ENCODE measurements at regions of chr11 and their contacts with region 1.

Region 1: DNA sequence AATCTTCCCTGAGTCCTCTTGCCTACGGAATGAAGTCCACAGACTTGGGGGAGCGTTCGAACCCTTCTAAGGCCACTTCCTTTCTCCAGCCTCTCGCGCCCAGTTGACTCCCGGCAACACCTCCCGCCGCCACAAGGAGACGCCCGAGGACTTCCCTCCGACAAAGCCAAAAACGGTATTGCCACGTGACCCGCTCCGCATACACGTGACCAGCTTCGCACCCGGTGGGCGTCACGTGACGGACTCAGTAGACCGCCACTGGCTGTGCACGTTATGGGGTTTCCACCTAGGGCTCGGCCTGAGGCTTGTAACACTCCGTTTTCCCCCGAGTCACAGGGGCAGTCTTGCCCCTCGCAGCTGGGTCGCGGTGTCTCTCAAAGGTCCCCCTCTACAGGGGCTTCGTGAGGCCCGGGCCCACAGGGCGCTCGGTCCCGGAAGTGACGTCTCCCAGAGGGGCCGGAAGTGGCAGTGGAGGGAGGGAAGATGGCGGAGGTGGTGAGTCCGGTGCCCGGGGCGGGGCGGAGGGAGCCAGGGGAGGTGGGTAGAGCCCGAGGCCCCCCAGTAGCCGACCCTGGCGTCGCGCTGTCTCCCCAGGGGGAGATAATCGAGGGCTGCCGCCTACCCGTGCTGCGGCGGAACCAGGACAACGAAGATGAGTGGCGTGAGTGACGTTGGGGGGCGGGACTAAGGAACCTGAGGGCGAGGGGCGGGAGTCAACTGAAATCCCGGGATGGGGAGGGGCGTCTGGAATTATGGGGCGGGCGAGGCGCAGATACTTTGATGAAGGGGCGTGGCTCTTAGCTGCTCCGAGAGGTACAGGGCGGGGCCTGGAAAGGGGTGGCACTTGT is at the start of gene KAT5:
- DNase-seq: peak; percentile 99
- ATAC-seq: peak; percentile 86
- H3K4me3 Mint-ChIP-seq: peak within 1 kb of the TSS; percentile 90
- H3K27ac Mint-ChIP-seq: peak within 1 kb of the TSS; percentile 96
- H3K4me1 Mint-ChIP-seq: peaks cover 27% of the 10 kb centered on the region
- H3K27me3 Mint-ChIP-seq: no peaks in the 10 kb centered on the region
- total RNA-seq, gene KAT5: 56.5 to 65.1 TPM

Region 2: DNA sequence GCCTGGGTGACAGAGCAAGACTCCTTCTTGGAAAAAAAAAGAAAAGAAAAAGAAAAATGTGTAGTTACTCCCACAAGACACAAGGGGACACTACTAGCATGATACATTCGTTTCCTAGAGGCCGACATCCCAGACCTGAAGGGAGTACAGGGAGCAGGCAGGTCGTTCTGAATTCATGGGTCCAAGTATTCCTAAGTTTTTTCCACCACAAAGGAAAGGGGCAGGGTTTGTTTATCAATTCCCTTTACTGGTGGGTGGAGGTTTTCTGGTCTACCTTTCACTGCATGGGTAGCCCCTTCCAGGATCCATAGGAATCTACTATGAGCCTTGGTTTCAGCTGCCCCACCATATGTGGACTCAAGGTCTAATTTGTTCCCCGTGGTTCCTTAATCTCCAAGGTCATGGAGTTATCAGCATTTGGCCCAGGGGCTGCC is 345.7 kb before region 1 on chr11:
- CTCF ChIA-PET with region 1: no interaction called
- POLR2A ChIA-PET with region 1: no interaction called
- intact Hi-C with region 1: no loop called
- DNase-seq: peak; percentile 48
- ATAC-seq: peak; percentile 72
- H3K4me3 Mint-ChIP-seq: no peak overlapping the region
- H3K27ac Mint-ChIP-seq: no peak overlapping the region
- H3K4me1 Mint-ChIP-seq: peaks cover 10% of the 10 kb centered on the region
- H3K27me3 Mint-ChIP-seq: no peaks in the 10 kb centered on the region

Region 3: GRCh38 chr11:65662799-65663638 is 49.0 kb before region 1 on chr11 and contains the start of gene RELA:
- CTCF ChIA-PET with region 1: interaction called, 4 read pairs
- POLR2A ChIA-PET with region 1: no interaction called
- intact Hi-C with region 1: loop called in 1 of 2 experiments (anchors 1 kb)
- DNase-seq: peak; percentile 96
- ATAC-seq: peak; percentile 90
- H3K4me3 Mint-ChIP-seq: peak within 1 kb of the TSS; percentile 88
- H3K27ac Mint-ChIP-seq: peak within 1 kb of the TSS; percentile 97
- H3K4me1 Mint-ChIP-seq: peaks cover 41% of the 10 kb centered on the region
- H3K27me3 Mint-ChIP-seq: no peaks in the 10 kb centered on the region
- total RNA-seq, gene RELA: 76.9 to 109 TPM

Region 4: DNA sequence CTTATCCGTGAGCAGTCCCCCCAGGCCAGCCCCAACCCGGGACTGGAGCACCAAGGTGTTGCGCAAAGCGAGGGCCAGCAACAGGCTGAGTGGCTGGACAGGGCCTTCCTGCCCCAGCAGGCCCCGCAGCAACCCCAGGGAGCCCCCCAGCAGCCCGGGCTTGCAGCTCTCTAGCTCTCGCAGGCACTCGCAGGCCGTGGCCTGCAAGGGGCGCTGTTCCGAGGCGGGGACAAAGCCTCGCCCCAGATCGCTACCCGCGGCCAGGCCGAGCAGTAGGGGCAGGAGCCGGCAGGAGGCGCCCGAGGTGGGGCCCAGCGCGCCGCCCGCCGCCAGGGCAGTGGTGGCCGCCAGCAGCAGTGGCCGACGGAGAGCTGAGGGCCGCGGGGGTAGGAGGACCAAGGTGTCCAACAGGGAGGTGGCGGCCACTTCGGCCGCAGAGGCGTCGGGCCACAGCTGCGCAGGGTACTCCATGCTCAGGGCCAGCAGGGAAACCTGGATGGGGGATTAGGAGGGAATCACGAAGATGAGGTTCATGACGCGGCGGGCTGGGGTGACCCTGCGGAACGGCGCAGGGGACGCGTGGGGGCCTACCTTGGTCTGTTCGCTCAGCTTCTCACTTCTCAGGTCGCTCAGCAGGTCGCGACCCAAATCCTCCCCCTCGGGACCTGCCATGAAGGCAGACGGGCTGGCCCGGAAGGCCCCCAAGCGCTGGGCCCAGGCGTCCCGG is 68.0 kb after region 1 on chr11:
- CTCF ChIA-PET with region 1: interaction called, 20 read pairs
- POLR2A ChIA-PET with region 1: interaction called, 6 read pairs
- intact Hi-C with region 1: loop called in 1 of 2 experiments (anchors 1 kb)
- DNase-seq: peak; percentile 94
- ATAC-seq: peak; percentile 81
- H3K4me3 Mint-ChIP-seq: peak overlapping the region; percentile 87
- H3K27ac Mint-ChIP-seq: peak overlapping the region; percentile 83
- H3K4me1 Mint-ChIP-seq: peaks cover 27% of the 10 kb centered on the region
- H3K27me3 Mint-ChIP-seq: peaks cover 10% of the 10 kb centered on the region

Region 5: DNA sequence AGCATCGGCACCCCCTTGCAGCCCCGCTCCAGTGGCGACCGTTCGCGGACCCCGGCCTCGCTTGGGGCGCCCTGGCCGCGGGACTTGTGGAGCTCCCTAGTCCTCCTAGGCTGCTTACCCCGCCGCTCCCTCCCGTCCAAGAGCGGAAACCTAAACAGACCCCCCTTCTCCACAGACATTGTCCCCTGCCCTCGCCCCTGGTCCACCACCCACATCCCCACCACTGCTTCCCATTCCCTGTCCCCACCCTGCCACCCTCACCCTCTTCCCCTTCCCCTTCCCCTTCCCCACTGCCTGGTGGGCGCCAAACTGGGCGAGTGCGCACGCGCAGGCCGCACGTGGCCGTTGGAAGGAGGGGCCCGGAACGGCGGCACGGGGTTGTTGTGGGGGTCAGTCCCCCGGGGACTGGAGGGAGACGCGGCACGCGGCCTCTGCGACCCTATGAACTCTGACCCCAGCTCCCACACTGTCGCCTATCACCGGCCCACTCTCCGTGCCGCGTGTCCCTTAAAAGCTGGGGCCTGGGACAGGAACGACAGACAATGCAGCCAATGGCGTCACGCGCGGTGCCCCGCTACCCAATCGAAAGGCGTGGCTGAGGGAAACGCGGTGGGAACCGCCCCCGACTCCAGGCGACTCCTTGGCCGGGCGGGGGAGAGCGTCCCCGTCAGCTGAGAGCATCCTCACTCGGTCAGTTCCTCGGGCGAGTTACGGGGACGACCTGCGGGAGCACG is 121.5 kb after region 1 on chr11 and contains the start of gene SNX32:
- CTCF ChIA-PET with region 1: interaction called, 6 read pairs
- POLR2A ChIA-PET with region 1: no interaction called
- intact Hi-C with region 1: loop called in 1 of 2 experiments (anchors 1 kb)
- DNase-seq: peak; percentile 98
- ATAC-seq: peak; percentile 99
- H3K4me3 Mint-ChIP-seq: no peak within 1 kb of the TSS
- H3K27ac Mint-ChIP-seq: no peak within 1 kb of the TSS
- H3K4me1 Mint-ChIP-seq: peaks cover 22% of the 10 kb centered on the region
- H3K27me3 Mint-ChIP-seq: no peaks in the 10 kb centered on the region
- total RNA-seq, gene SNX32: 2.9 to 3.0 TPM

Region 6: DNA sequence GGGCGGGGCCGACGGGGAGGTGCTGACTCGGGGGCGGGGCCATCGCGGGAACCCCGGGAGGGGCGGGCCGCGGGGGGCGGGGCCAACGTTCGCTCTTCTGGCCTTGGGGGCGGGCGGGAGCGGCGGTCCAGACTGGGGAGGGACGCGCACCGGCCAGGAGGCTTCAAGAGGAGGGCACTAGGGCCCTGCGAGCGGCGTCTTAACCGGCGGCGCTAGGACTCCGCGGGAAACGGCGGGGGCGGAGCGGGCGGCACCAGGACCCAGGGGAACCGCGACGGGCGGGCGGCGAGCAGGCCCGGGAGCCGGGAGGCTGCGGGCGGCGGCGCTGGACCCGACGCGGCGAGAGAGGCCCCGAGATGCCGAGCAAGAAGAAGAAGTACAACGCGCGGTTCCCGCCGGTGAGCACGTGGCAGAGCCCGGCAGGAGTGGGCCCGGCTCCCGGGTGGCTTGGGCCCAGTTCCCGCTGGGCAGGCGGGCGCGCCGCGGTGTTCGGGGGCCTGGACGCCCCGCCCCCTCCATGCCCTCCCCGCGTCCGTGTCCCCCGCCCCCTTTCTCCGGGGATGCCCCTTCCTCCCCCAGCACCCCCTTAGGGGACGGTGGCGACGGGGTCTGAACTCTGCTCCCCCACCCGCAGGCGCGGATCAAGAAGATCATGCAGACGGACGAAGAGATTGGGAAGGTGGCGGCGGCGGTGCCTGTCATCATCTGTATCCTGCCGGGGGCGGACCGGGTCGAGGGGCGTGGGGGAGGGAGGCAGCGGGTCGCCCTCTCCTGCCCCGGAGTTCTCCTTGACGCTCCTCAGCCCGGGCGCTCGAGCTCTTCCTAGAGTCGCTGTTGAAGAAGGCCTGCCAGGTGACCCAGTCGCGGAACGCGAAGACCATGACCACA is 207.4 kb after region 1 on chr11 and contains the start of gene DRAP1:
- CTCF ChIA-PET with region 1: no interaction called
- POLR2A ChIA-PET with region 1: no interaction called
- intact Hi-C with region 1: loop called in 1 of 2 experiments (anchors 1 kb)
- DNase-seq: peak; percentile 100
- ATAC-seq: peak; percentile 94
- H3K4me3 Mint-ChIP-seq: peak within 1 kb of the TSS; percentile 91
- H3K27ac Mint-ChIP-seq: peak within 1 kb of the TSS; percentile 88
- H3K4me1 Mint-ChIP-seq: peaks cover 35% of the 10 kb centered on the region
- H3K27me3 Mint-ChIP-seq: no peaks in the 10 kb centered on the region
- total RNA-seq, gene DRAP1: 111 to 158 TPM

Region 7: DNA sequence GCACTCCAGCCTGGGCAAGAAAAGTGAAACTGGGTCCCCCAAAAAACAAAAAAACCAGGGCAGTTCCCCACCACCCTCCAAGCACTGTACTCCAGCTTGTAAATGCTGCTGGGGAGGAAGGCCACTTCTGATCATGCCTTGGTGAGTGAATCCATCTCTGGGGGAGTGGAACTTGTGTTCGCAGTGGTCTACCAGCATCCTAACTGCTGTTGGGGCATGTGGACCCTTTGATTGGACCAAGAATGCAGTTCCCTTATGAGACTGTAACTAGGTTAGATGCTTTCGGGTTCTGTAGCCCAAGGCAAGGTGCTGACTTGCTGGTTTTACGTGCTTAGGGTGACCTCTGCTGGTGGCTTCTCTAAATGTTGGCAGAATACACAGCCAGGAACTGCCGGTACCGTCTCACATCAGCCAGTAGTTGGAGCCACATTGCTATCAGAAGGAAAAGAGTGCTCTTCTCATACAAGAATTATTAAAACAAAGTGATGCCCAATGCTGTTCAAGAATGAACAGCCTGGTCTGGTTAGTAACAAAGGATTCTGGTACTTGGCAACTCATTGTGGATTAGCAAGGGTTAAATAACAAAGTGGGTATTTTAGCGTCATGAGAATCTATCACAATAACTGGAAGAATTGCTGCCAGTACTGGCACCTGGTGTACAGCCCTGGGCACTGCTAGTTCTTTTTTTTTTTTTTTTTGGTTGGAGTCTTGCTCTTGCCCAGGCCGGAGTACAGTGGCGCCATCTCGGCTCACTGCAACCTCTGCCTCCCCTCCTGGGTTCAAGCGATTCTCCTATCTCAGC is 277.0 kb after region 1 on chr11:
- CTCF ChIA-PET with region 1: interaction called, 4 read pairs
- POLR2A ChIA-PET with region 1: no interaction called
- intact Hi-C with region 1: loop called (anchors 1 to 5 kb)
- DNase-seq: peak; percentile 95
- ATAC-seq: peak; percentile 99
- H3K4me3 Mint-ChIP-seq: no peak overlapping the region
- H3K27ac Mint-ChIP-seq: peak overlapping the region; percentile 59
- H3K4me1 Mint-ChIP-seq: peaks cover 2% of the 10 kb centered on the region
- H3K27me3 Mint-ChIP-seq: no peaks in the 10 kb centered on the region

Region 8: GRCh38 chr11:66715346-66716085 is 1003.5 kb after region 1 on chr11:
- CTCF ChIA-PET with region 1: no interaction called
- POLR2A ChIA-PET with region 1: no interaction called
- intact Hi-C with region 1: no loop called
- DNase-seq: no peak
- ATAC-seq: no peak
- H3K4me3 Mint-ChIP-seq: no peak overlapping the region
- H3K27ac Mint-ChIP-seq: no peak overlapping the region
- H3K4me1 Mint-ChIP-seq: peaks cover 9% of the 10 kb centered on the region
- H3K27me3 Mint-ChIP-seq: peaks cover 22% of the 10 kb centered on the region